ENCODE measurements at regions of chr7 and their contacts with region 1.

Region 1: DNA sequence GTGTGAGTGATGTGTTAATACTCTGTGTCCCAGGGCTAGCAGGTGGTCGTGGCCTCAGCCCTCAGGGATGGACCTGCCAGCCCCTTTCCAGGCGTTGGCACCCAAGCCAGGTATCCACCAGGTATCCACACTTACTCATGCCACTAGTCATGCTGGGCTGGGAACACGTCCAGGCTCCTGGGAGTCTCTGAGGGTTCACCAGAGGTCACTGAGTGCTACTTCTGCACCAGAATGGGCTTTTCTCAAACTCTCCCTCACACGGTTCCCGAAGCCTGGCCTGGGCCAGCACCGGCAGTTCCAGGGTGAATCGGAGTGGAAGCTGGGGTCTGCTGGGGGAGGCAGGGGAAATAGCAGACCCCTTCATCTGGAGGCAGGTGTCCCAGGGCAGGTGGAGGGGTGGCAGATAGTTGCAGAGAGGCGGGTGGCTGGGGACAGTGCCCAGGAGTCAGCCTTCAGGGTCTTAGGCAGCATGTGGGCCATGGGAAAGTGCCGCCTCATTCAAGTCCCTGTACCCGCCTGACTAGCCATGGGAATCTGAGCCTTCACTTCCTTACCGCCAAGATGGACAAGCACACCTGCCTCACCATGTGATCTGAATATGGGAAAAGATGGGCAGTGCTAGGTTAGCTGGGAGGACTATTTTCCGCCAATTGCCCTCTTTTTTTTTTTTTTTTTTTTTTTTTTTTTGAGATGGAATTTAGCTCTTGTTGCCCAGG is 95.5 kb upstream of the GTF2I start:
- DNase-seq: no peak
- H3K4me3 ChIP-seq: no peak overlapping the region
- H3K27ac ChIP-seq: no peak overlapping the region
- H3K4me1 ChIP-seq: no peaks in the 10 kb centered on the region
- H3K27me3 ChIP-seq: no peaks in the 10 kb centered on the region

Region 2: DNA sequence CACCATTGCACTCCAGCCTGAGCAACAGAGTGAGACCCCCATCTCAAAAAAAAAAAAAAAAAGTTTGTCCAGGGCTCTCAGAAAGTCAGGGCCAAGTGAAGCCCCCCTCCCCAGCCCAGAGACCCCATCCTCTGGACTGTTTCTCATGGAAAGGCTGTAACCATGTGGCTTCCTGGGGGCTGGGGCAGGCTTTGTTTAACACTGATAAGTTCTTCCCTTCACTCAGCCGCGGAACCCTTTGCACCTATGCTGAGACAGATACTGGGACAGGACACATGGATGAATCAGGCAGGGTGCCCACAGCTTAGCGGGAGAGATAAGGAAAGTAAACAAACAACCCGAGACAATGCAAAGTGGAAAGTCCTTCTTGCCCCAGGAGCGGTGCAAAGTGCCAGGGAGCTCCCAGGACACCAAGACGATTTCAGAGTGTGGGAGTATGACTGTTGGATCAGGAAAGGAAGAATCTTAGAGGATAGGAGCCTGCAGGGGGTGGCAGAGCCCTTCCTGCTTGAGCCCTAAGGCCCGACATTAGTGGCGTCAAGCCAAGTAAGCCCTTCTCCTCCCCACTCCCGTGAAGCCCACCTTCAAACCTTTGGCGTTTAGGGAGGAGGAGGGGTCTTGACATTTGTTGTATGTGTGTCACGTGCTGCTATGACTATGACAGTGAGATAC is 949.3 kb before region 1 on chr7:
- in situ Hi-C with region 1: no loop called
- DNase-seq: peak; percentile 41
- H3K4me3 ChIP-seq: no peak overlapping the region
- H3K27ac ChIP-seq: no peak overlapping the region
- H3K4me1 ChIP-seq: no peaks in the 10 kb centered on the region
- H3K27me3 ChIP-seq: peaks cover 5% of the 10 kb centered on the region; the same call in 1 of the 2 replicates

Region 3: GRCh38 chr7:74424291-74424880 is 137.7 kb before region 1 on chr7:
- in situ Hi-C with region 1: loop called (anchors 5 kb)
- DNase-seq: no peak
- H3K4me3 ChIP-seq: no peak overlapping the region
- H3K27ac ChIP-seq: no peak overlapping the region
- H3K4me1 ChIP-seq: no peaks in the 10 kb centered on the region
- H3K27me3 ChIP-seq: no peaks in the 10 kb centered on the region